Transverse colon (tissue), 4 donors: ENCODE measurements at regions of chr6 and their contacts with region 1.

Region 1: GRCh38 chr6:51514748-51515402 is 572.5 kb downstream of the PKHD1 start:
- DNase-seq: no peak
- H3K4me3 ChIP-seq: no peak overlapping the region
- H3K27ac ChIP-seq: no peak overlapping the region
- H3K4me1 ChIP-seq: no peaks in the 10 kb centered on the region
- H3K27me3 ChIP-seq: no peaks in the 10 kb centered on the region
- CTCF ChIP-seq: no peak
- EP300 ChIP-seq: no peak
- POLR2A ChIP-seq: no peak

Region 2: GRCh38 chr6:50936277-50936681 is 578.6 kb before region 1 on chr6:
- in situ Hi-C with region 1: no loop called
- intact Hi-C with region 1: no loop called
- DNase-seq: no peak
- H3K4me3 ChIP-seq: no peak overlapping the region
- H3K27ac ChIP-seq: no peak overlapping the region
- H3K4me1 ChIP-seq: no peaks in the 10 kb centered on the region
- H3K27me3 ChIP-seq: no peaks in the 10 kb centered on the region
- CTCF ChIP-seq: no peak
- EP300 ChIP-seq: no peak
- POLR2A ChIP-seq: no peak

Region 3: GRCh38 chr6:51541847-51542246 is 27.0 kb after region 1 on chr6:
- in situ Hi-C with region 1: no loop called
- intact Hi-C with region 1: no loop called
- DNase-seq: no peak
- H3K4me3 ChIP-seq: no peak overlapping the region
- H3K27ac ChIP-seq: no peak overlapping the region
- H3K4me1 ChIP-seq: no peaks in the 10 kb centered on the region
- H3K27me3 ChIP-seq: no peaks in the 10 kb centered on the region
- CTCF ChIP-seq: no peak
- EP300 ChIP-seq: no peak
- POLR2A ChIP-seq: no peak

Region 4: DNA sequence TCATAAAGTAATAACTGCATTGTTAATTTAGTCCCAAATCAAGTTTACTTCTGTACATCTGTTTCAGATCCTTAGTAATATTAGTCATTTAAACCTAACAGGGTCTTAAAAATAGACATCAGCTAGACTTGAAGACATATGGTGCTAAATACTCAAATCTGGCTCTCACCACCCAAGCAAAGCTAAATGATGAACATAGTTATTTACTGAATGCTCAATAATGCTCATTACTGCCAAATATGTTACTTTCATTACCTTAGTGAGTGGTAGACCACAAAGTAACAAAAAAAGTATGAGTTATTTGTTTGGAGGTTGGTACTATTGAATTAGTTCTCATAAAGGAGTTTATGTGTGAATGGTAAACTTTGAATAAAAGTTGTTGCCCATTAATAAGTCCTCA is 70.4 kb after region 1 on chr6:
- in situ Hi-C with region 1: no loop called
- intact Hi-C with region 1: loop called (anchors 5 kb)
- DNase-seq: no peak
- H3K4me3 ChIP-seq: no peak overlapping the region
- H3K27ac ChIP-seq: no peak overlapping the region
- H3K4me1 ChIP-seq: no peaks in the 10 kb centered on the region
- H3K27me3 ChIP-seq: no peaks in the 10 kb centered on the region
- CTCF ChIP-seq: no peak
- EP300 ChIP-seq: no peak
- POLR2A ChIP-seq: no peak

Region 5: GRCh38 chr6:52243282-52243893 is 728.5 kb after region 1 on chr6:
- in situ Hi-C with region 1: no loop called
- intact Hi-C with region 1: no loop called
- DNase-seq: no peak
- H3K4me3 ChIP-seq: no peak overlapping the region
- H3K27ac ChIP-seq: no peak overlapping the region
- H3K4me1 ChIP-seq: no peaks in the 10 kb centered on the region
- H3K27me3 ChIP-seq: no peaks in the 10 kb centered on the region
- CTCF ChIP-seq: no peak
- EP300 ChIP-seq: no peak
- POLR2A ChIP-seq: no peak